Activated T-helper 2 cell treated with anti-CD3 and anti-CD28 coated beads, Interferon-gamma antibody, Interleukin-2, Interleukin-4, amounts not matched to agents 10 μg/mL and 5 μg/mL and 100 μg/mL, durations not matched to agents 14 hours and 24 hours and 36 hours (primary cell): ENCODE measurements at regions of chr1 and their contacts with region 1.

Region 1: GRCh38 chr1:41416552-41417334 is 55.5 kb downstream of the FOXO6 start:
- DNase-seq: peak; percentile 42
- H3K4me3 Mint-ChIP-seq: no peak overlapping the region
- H3K27ac Mint-ChIP-seq: no peak overlapping the region
- H3K4me1 Mint-ChIP-seq: no peaks in the 10 kb centered on the region
- H3K27me3 Mint-ChIP-seq: no peaks in the 10 kb centered on the region

Region 2: GRCh38 chr1:41030872-41031616 is 385.7 kb before region 1 on chr1:
- intact Hi-C with region 1: no loop called
- DNase-seq: no peak
- H3K4me3 Mint-ChIP-seq: no peak overlapping the region
- H3K27ac Mint-ChIP-seq: no peak overlapping the region
- H3K4me1 Mint-ChIP-seq: no peaks in the 10 kb centered on the region
- H3K27me3 Mint-ChIP-seq: no peaks in the 10 kb centered on the region

Region 3: GRCh38 chr1:41268154-41268770 is 148.5 kb before region 1 on chr1:
- intact Hi-C with region 1: loop called (anchors 1 kb)
- DNase-seq: peak; percentile 32
- H3K4me3 Mint-ChIP-seq: no peak overlapping the region
- H3K27ac Mint-ChIP-seq: no peak overlapping the region
- H3K4me1 Mint-ChIP-seq: no peaks in the 10 kb centered on the region
- H3K27me3 Mint-ChIP-seq: peaks cover 14% of the 10 kb centered on the region

Region 4: DNA sequence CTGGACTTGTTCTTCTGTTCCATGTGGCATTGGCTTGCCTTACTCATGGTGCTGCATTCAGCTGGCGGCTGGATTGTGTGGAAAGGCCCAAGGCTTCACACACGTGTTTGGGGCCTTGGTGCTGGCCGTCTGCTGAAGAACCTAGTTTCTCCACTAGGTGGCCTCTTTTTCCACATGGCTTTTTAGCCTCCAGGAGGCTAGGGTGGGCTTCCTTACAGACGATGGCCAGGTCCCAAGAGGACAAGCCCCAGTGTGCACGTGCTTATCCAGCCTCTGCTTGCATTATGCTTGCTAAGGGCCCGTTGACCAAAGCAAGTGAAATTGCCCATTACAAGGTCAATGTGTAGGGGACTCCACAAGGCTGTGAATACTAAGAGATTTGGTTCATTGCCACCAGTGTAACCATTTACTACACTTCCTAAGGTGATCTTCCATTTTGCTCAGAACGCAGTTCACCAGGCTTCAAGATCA is 103.0 kb before region 1 on chr1:
- intact Hi-C with region 1: loop called (anchors 2 kb)
- DNase-seq: no peak
- H3K4me3 Mint-ChIP-seq: no peak overlapping the region
- H3K27ac Mint-ChIP-seq: no peak overlapping the region
- H3K4me1 Mint-ChIP-seq: no peaks in the 10 kb centered on the region
- H3K27me3 Mint-ChIP-seq: peaks cover 13% of the 10 kb centered on the region

Region 5: GRCh38 chr1:41322835-41323627 is 93.7 kb before region 1 on chr1:
- intact Hi-C with region 1: loop called (anchors 1 kb)
- DNase-seq: no peak
- H3K4me3 Mint-ChIP-seq: no peak overlapping the region
- H3K27ac Mint-ChIP-seq: no peak overlapping the region
- H3K4me1 Mint-ChIP-seq: no peaks in the 10 kb centered on the region
- H3K27me3 Mint-ChIP-seq: peaks cover 4% of the 10 kb centered on the region